ENCODE measurements at regions of chr4 and their contacts with region 1.

Region 1: DNA sequence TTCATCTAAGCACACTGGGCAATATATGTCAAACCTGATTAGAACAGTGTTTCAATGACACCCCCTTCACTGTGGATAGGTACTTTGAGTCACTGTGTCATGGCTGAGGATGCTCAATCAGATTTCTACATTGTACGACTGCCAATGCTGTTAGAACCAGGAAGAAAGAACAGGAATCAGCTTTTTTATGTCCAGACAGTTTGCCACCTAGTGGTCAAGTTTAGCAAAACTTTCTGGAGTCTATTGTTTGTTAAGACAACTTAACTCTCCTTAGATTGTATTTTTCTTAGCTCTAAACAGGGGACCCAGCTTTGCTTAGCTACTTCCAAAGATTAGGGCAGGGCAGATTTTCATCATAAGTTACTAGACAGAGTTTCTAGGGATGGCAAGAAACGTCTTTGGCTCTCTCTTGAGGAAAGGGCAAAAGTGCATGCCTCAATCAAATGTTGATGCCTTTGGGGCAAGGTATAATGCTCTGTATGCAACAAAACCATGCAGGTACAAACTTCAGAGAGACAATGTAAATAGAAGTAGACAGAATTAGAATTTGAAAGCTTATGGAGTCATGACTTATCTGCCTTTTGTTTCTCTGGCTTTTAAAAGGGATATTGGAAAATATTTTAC is 40.5 kb upstream of the BMP3 start:
- DNase-seq: peak; percentile 5
- H3K4me3 ChIP-seq: no peak overlapping the region
- H3K27ac ChIP-seq: no peak overlapping the region
- H3K4me1 ChIP-seq: no peaks in the 10 kb centered on the region
- H3K27me3 ChIP-seq: no peaks in the 10 kb centered on the region
- CTCF ChIP-seq: peak; percentile 78
- EP300 ChIP-seq: no peak
- RAD21 ChIP-seq: peak; percentile 68

Region 2: GRCh38 chr4:80365928-80366327 is 624.1 kb before region 1 on chr4:
- CTCF ChIA-PET with region 1: interaction called, 18 read pairs
- POLR2A ChIA-PET with region 1: no interaction called
- DNase-seq: peak; percentile 34
- H3K4me3 ChIP-seq: no peak overlapping the region
- H3K27ac ChIP-seq: no peak overlapping the region
- H3K4me1 ChIP-seq: no peaks in the 10 kb centered on the region
- H3K27me3 ChIP-seq: no peaks in the 10 kb centered on the region
- CTCF ChIP-seq: peak; percentile 86
- EP300 ChIP-seq: peak in 1 of 2 experiments; percentile 26; a peak in 1 of 4 replicates
- RAD21 ChIP-seq: peak; percentile 76

Region 3: GRCh38 chr4:81021142-81021944 is 31.3 kb after region 1 on chr4:
- CTCF ChIA-PET with region 1: interaction called, 10 read pairs
- POLR2A ChIA-PET with region 1: no interaction called
- DNase-seq: no peak
- H3K4me3 ChIP-seq: no peak overlapping the region
- H3K27ac ChIP-seq: no peak overlapping the region; a peak in 1 of 4 replicates
- H3K4me1 ChIP-seq: no peaks in the 10 kb centered on the region; a peak in 2 of 4 replicates
- H3K27me3 ChIP-seq: peaks cover 18% of the 10 kb centered on the region
- CTCF ChIP-seq: no peak
- EP300 ChIP-seq: no peak
- RAD21 ChIP-seq: no peak